Cardiac septum (tissue), 1 donor: ENCODE measurements at regions of chr3 and their contacts with region 1.

Region 1: GRCh38 chr3:72887705-72888545 is at the start of gene GXYLT2:
- DNase-seq: peak; percentile 82
- total RNA-seq, gene GXYLT2: 14.6 TPM

Region 2: DNA sequence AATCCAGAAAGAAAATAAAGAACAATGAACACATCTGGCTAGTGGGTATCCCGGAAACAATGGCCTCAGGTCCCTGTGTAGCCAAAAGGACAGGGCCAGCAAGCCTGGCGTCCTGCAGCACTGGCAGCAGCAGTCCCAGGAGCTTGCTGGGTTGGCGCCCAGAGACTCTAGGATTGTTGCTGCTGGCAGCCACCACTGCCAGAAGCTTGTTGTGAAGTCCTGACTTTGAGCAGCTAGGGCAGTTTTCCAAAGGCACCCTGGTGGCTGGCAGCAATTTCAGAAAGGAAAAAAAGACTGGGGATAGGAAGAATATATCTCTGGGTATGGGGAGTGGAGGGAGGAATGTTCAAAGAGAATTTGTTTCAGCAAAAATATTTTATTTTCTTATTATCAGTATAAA is 51.0 kb before region 1 on chr3:
- intact Hi-C with region 1: no loop called
- DNase-seq: peak; percentile 85

Region 3: GRCh38 chr3:72847751-72848702 is 39.9 kb before region 1 on chr3 and contains the start of gene SHQ1:
- intact Hi-C with region 1: loop called (anchors 5 kb)
- DNase-seq: peak; percentile 97
- total RNA-seq, gene SHQ1: 11.1 TPM

Region 4: GRCh38 chr3:72907731-72908620 is 20.1 kb after region 1 on chr3:
- intact Hi-C with region 1: loop called (anchors 2 kb)
- DNase-seq: no peak